Activated CD4-positive, alpha-beta T cell treated with anti-CD3 and anti-CD28 coated beads, Interleukin-2, amount 10 ng/mL, durations not matched to agents 24 days and 14 days (primary cell): ENCODE measurements at regions of chr21 and their contacts with region 1.

Region 1: DNA sequence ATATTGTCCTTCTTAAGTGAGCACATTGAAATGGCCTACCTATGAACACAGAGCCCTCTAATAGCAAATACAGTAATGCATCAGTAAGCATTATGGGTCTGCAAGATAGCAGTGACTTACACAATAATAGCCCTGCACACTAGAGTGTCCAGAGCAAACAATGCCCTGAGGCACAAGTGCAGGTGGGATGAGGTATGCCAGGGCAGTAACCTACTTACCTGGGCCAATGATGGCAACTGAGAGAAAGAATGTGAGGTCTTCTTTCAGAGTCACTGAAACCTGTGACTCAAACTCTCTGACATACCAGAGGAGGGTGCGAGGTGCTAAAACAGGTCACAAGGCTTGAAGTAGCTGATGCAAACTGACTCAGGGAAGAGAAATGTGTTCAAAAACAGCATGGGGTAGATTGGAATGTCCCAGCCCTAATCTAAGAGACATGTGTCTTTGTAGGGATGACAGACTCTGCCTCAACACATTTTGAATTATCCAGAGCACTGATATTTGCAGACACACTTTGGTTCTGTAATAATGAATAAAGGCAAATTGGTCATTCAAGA is 168.5 kb upstream of the RUNX1 start:
- DNase-seq: no peak
- H3K4me3 Mint-ChIP-seq: no peak overlapping the region
- H3K27ac Mint-ChIP-seq: peak overlapping the region; percentile 64
- H3K4me1 Mint-ChIP-seq: peaks cover 17% of the 10 kb centered on the region
- H3K27me3 Mint-ChIP-seq: no peaks in the 10 kb centered on the region

Region 2: GRCh38 chr21:35179990-35180540 is 37.5 kb before region 1 on chr21:
- intact Hi-C with region 1: loop called (anchors 5 kb)
- DNase-seq: no peak
- H3K4me3 Mint-ChIP-seq: no peak overlapping the region
- H3K27ac Mint-ChIP-seq: no peak overlapping the region
- H3K4me1 Mint-ChIP-seq: peaks cover 6% of the 10 kb centered on the region
- H3K27me3 Mint-ChIP-seq: peaks cover 4% of the 10 kb centered on the region

Region 3: DNA sequence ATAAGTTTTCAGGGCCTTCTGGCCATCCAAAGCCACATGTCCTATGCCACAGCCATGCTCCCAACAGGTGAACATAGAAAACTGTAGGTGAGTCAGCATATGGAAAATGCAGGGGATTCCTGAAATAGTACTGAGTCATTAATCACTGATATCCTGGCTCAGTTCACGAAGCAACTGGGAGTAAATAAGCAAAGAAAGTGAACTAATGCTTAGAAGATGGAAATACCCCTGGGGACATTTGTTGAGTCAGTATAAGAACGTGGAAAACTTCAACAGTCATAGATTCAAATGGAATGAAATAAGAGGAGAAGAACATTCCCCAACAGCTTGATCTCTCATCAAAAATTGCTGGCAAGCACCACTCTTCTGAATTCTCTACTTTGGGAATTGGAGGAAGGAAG is 19.6 kb before region 1 on chr21:
- intact Hi-C with region 1: loop called (anchors 2 kb)
- DNase-seq: no peak
- H3K4me3 Mint-ChIP-seq: no peak overlapping the region
- H3K27ac Mint-ChIP-seq: peak overlapping the region; percentile 25
- H3K4me1 Mint-ChIP-seq: peaks cover 26% of the 10 kb centered on the region
- H3K27me3 Mint-ChIP-seq: no peaks in the 10 kb centered on the region

Region 4: DNA sequence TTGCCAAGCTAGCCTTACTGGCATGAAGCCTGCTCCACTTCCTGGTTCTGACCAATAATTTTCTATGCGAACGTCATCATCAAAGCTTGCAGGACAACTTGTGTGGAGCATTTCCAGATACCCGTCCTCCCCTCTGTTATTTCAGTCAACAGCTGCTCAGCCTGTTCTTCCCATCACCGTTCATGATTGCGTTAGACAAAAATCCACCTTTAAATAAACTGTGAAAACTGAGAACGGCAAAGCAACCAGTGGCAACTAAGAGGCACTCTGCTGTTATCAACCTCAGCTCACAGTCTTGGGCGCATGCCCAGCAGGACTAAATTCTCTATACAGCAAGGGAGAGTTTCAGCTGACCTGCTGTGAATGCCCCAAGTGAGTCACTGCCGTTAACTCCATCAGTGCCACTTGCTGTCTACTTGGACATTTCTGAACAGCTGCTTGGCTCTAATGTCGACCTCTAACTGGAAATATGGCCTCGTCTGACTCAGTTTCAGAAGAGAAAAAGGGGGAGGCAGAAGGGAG is 38.9 kb after region 1 on chr21:
- intact Hi-C with region 1: loop called (anchors 5 kb)
- DNase-seq: no peak
- H3K4me3 Mint-ChIP-seq: no peak overlapping the region
- H3K27ac Mint-ChIP-seq: peak overlapping the region; percentile 12
- H3K4me1 Mint-ChIP-seq: no peaks in the 10 kb centered on the region
- H3K27me3 Mint-ChIP-seq: no peaks in the 10 kb centered on the region

Region 5: GRCh38 chr21:36403713-36404112 is 1186.1 kb after region 1 on chr21:
- intact Hi-C with region 1: no loop called
- DNase-seq: no peak
- H3K4me3 Mint-ChIP-seq: no peak overlapping the region
- H3K27ac Mint-ChIP-seq: no peak overlapping the region
- H3K4me1 Mint-ChIP-seq: no peaks in the 10 kb centered on the region
- H3K27me3 Mint-ChIP-seq: no peaks in the 10 kb centered on the region